Heart left ventricle (tissue), 16 donors: ENCODE measurements at regions of chr15 and their contacts with region 1.

Region 1: GRCh38 chr15:88834211-88834812 is 31.1 kb downstream of the ACAN start:
- DNase-seq: peak in 3 of 5 donors; percentile 23 to 56 (median 26)
- ATAC-seq: peak in 3 of 4 donors; percentile 44 to 75 (median 75)
- H3K4me3 ChIP-seq: no peak overlapping the region
- H3K27ac ChIP-seq: peak overlapping the region in 1 of 12 donors; percentile 34
- H3K4me1 ChIP-seq: peaks cover 0 to 8% (median 0%) of the 10 kb centered on the region in 12 donors
- H3K27me3 ChIP-seq: peaks cover 0 to 3% (median 0%) of the 10 kb centered on the region in 9 donors
- CTCF ChIP-seq: peak; percentile 39 to 76 (median 61)
- POLR2A ChIP-seq: no peak

Region 2: DNA sequence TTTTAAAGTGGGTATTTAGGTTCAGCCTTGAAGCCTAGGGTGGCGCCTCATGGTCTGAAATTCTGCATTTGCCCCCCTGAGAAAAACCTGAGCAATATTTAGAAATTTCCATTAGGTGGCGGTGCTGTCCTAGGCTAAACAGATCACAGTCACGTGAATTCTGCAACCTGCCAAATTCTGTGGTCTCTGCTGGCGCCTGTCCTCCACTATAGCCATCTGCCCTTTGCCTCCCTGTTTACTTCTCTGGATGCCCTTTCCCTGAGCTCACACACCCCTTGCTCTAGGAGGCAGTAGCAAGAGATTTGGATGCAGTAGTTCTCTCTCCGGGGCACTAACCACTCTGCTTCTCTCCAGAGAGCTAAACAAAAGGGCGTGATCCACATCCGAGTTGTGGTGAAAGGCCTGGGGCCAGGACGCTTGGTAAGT is 357.7 kb before region 1 on chr15:
- intact Hi-C with region 1: loop called in 5 of 10 experiments (anchors 10 kb)
- DNase-seq: peak in 4 of 5 donors; percentile 34 to 56 (median 50)
- ATAC-seq: peak; percentile 48 to 93 (median 86)
- H3K4me3 ChIP-seq: no peak overlapping the region
- H3K27ac ChIP-seq: peak overlapping the region in 5 of 12 donors; percentile 2 to 65 (median 19)
- H3K4me1 ChIP-seq: peaks cover 0 to 9% (median 0%) of the 10 kb centered on the region in 12 donors
- H3K27me3 ChIP-seq: no peaks in the 10 kb centered on the region
- CTCF ChIP-seq: peak; percentile 33 to 64 (median 52)
- POLR2A ChIP-seq: no peak

Region 3: GRCh38 chr15:88484682-88485331 is 349.5 kb before region 1 on chr15:
- intact Hi-C with region 1: loop called in 2 of 10 experiments (anchors 10 kb)
- DNase-seq: no peak
- ATAC-seq: peak in 2 of 4 donors; percentile 6 to 21
- H3K4me3 ChIP-seq: no peak overlapping the region
- H3K27ac ChIP-seq: no peak overlapping the region
- H3K4me1 ChIP-seq: peaks cover 0 to 6% (median 0%) of the 10 kb centered on the region in 12 donors
- H3K27me3 ChIP-seq: no peaks in the 10 kb centered on the region
- CTCF ChIP-seq: no peak
- POLR2A ChIP-seq: no peak

Region 4: DNA sequence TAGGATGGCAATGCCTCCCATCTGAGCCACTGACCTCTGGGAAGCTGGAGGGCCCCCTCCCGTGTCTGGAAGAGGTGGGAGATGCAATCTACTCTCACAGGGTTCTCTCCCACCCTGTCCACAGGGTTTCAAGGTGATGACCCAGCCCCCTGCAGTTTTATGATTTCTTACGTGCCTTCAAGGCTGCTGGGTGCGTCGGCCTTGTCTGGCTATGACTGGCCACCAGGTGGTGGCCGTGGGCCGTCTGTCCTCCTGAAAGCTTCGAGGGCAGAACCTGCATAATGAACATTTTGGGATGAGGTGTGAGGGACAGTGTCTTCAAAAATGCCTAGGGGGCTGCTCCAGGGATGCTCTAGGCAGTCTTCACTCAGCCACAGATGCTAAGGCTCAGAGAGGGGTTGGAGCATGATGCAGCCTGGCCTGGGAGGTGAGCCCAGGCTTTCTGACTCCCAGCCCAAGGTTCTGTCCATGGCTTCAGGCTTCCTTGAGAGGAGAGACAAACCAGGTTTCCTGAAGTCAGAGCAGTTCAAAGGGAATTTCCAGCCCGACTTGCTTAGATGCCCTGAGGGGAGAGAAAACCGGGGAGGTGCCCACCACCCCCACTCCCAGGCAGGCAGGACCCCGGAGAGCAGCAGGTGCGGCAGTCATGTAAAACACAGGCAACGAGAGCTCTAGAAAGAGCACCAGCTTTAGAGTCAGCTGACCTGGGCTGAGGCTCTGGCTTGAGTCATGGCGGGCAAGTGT is 176.8 kb before region 1 on chr15:
- intact Hi-C with region 1: loop called (anchors 1 to 5 kb)
- DNase-seq: no peak
- ATAC-seq: peak in 3 of 4 donors; percentile 54 to 55 (median 55)
- H3K4me3 ChIP-seq: no peak overlapping the region
- H3K27ac ChIP-seq: no peak overlapping the region
- H3K4me1 ChIP-seq: peaks cover 0 to 12% (median 2%) of the 10 kb centered on the region in 12 donors
- H3K27me3 ChIP-seq: no peaks in the 10 kb centered on the region
- CTCF ChIP-seq: peak; percentile 44 to 81 (median 70)
- POLR2A ChIP-seq: no peak